Dendritic cell treated with granulocyte-macrophage colony-stimulating factor and Interleukin-4, amounts not matched to agents 40 ng/mL and 50 ng/mL, for 4 days (primary cell): ENCODE measurements at regions of chr1 and their contacts with region 1.

Region 1: GRCh38 chr1:38026592-38027200 is 14.2 kb downstream of the UTP11 start:
- H3K4me3 Mint-ChIP-seq: no peak overlapping the region
- H3K27ac Mint-ChIP-seq: no peak overlapping the region
- H3K4me1 Mint-ChIP-seq: peaks cover 41% of the 10 kb centered on the region
- H3K27me3 Mint-ChIP-seq: peaks cover 14% of the 10 kb centered on the region

Region 2: DNA sequence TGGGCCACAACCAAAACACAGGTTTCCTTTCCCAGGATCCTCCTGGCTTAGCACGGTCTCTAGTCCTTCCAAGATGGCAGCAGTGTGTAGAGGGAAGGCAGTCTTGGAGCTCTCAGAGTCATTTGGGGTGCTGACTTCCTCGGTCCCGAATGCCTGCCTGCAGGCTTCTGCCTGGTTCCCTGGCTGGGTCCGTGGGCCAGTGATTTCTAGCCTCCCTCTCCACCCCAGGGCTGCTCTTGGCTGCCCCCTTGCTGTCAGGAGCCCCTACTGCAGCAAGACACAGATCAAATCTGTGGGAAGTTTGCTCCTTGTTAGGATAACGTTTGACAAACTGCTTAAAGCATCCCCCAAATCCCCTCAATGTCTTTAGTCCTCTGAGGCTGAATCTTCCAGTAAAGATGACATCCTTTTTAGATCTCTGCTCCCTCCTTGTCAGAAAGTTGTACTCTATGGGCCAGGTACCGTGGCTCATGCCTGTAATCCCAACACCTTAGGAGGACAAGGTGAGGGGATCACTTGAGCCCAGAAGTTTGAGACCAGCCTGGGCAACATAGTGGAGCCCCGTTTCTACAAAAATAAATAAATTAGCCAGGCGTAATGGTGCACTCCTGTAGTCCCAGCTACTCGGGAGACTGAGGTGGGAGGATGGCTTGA is 560.4 kb after region 1 on chr1:
- intact Hi-C with region 1: loop called (anchors 10 kb)
- H3K4me3 Mint-ChIP-seq: no peak overlapping the region
- H3K27ac Mint-ChIP-seq: no peak overlapping the region
- H3K4me1 Mint-ChIP-seq: peaks cover 5% of the 10 kb centered on the region
- H3K27me3 Mint-ChIP-seq: peaks cover 16% of the 10 kb centered on the region

Region 3: DNA sequence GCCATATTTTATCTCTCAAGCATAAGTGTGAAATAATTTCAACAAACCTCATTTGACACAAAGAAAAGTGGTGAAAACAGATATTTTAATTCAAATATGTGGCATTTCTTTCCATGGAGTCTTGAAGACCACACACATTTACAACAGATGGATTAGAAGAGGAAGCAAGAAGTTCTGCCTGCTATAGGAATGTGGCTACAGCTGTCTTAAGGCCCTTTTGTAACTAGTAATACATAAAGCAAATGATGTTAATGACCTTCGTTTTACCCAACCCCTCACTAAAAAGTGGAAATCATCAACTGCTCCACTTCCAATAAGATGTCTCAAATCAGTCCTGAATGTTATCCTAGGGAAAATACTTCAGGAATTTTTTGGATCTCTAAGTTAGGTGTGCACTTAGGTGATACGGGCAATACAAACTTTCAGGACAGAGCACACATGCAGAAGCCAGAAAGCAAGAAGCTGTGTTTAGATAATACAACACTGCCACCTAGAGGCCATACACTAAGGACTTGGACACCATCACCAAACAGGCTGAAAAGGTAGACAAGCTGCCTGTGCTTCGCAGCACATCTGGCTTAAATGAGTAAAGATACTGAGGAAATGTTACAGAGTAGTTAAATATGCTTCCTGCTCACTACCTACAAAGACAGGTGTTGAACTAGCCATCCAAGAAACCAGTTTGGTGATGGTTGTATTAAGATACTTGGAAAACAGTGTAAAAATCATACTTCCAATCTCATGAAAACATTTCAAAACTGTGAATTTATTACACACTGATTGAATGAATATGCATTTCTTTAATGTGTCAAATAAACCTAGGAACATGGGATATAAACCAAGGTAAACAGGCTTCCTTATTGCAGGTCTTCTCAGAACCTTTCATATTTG is 808.5 kb after region 1 on chr1:
- intact Hi-C with region 1: loop called (anchors 5 kb)
- H3K4me3 Mint-ChIP-seq: no peak overlapping the region
- H3K27ac Mint-ChIP-seq: no peak overlapping the region
- H3K4me1 Mint-ChIP-seq: peaks cover 23% of the 10 kb centered on the region
- H3K27me3 Mint-ChIP-seq: no peaks in the 10 kb centered on the region